BJ (cell line): ENCODE measurements at regions of chr17 and their contacts with region 1.

Region 1: DNA sequence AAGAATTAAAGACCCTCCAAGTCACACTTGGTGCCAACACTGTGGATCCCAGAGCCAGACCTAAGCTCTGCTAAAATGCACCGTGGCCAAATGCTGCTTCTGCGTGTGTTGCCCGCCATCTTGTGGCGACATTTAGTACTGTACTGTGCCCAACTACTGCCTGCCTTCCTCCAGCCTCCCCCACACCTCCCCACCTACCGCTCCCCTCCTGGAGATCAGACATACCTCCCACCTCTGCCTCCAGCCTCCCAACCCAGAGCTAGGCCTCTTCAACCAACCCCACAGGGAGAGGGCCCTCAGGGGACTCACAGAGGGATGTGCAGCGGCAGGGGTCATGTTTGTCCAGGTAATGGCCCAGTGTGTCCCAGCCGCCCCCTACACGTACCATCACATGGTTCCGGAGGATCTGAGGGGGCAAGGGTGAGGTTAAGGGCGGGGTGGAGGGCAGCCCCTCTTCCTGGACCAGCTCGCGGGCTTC is 5.5 kb downstream of the GAS2L2 start:
- DNase-seq: no peak
- H3K4me3 ChIP-seq: no peak overlapping the region
- H3K27me3 ChIP-seq: peaks cover 13% of the 10 kb centered on the region
- CTCF ChIP-seq: peak; percentile 82

Region 2: DNA sequence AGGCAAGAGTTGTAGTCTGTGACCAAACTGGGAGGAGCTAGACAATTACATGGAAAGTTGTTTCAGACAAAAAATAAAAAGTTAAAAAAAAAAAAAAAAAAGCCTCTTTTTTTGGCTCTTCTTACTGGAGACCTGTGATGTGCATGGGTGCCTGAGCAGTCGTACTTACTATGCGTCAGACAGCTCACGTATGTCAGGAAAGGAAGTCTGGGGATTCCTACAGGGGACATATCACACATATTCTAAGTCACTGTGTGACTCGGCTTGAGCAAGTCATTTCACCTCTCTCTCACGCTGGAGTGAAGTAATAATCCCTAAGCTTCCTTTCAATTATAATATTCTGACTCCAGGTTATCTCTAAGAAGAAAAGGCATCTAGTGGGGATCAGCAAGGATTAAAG is 192.9 kb before region 1 on chr17:
- CTCF ChIA-PET with region 1: interaction called, 12 read pairs
- POLR2A ChIA-PET with region 1: no interaction called
- DNase-seq: no peak
- H3K4me3 ChIP-seq: no peak overlapping the region
- H3K27me3 ChIP-seq: peaks cover 4% of the 10 kb centered on the region; the same call in 1 of the 2 replicates
- CTCF ChIP-seq: no peak

Region 3: GRCh38 chr17:35618628-35619027 is 129.0 kb before region 1 on chr17:
- CTCF ChIA-PET with region 1: interaction called, 268 read pairs
- POLR2A ChIA-PET with region 1: no interaction called
- DNase-seq: no peak
- H3K4me3 ChIP-seq: no peak overlapping the region
- H3K27me3 ChIP-seq: no peaks in the 10 kb centered on the region
- CTCF ChIP-seq: no peak

Region 4: GRCh38 chr17:35660902-35661301 is 86.7 kb before region 1 on chr17:
- CTCF ChIA-PET with region 1: interaction called, 17 read pairs
- POLR2A ChIA-PET with region 1: no interaction called
- DNase-seq: no peak
- H3K4me3 ChIP-seq: no peak overlapping the region
- H3K27me3 ChIP-seq: no peaks in the 10 kb centered on the region
- CTCF ChIP-seq: 0 out of 2 replicates have a peak, but pooled peaks have one; percentile 8

Region 5: DNA sequence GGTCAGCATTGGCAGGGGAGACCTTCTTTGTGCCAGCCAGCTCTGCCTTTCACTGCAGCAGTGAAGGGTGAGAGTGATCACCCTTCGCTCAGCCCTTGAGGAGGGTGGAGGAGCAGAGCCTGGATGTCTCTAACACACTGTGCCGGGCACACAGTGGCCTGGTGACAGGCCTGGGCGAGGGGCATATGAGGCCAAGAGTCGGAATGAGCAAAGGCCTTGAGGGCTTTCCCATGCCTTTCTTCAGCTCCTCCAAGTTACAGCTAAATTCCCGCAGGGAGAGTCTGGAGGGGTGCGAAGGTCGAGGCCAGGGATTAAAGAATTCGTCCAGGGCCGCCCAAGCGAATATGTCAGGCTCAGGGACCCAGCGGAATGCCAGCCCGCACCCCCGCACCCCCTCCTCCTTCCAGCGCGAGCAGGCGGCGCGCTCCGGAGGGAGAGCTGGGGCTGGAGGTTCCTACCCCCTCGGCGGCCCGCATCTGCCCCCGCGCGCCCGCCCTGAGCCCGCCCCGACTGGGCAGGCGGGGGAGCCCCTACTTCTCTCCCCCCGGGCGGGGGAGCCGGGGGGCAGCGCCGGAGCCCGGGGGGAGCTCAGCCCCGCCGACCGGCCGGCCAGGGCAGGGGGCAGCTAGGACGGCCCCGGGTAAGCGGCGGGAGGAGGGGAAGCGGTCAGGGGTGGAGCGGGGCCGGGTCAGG is 16.2 kb before region 1 on chr17 and contains the start of gene RASL10B:
- CTCF ChIA-PET with region 1: interaction called, 27 read pairs
- POLR2A ChIA-PET with region 1: no interaction called
- DNase-seq: no peak
- H3K4me3 ChIP-seq: peak within 1 kb of the TSS; percentile 59
- H3K27me3 ChIP-seq: no peaks in the 10 kb centered on the region
- CTCF ChIP-seq: no peak
- polyA plus RNA-seq, gene RASL10B: 3.2 and 4.5 TPM in 2 replicates

Region 6: GRCh38 chr17:35849469-35850348 is 102.1 kb after region 1 on chr17:
- CTCF ChIA-PET with region 1: no interaction called
- POLR2A ChIA-PET with region 1: no interaction called
- DNase-seq: peak; percentile 4
- H3K4me3 ChIP-seq: no peak overlapping the region
- H3K27me3 ChIP-seq: no peaks in the 10 kb centered on the region
- CTCF ChIP-seq: peak; percentile 80

Region 7: DNA sequence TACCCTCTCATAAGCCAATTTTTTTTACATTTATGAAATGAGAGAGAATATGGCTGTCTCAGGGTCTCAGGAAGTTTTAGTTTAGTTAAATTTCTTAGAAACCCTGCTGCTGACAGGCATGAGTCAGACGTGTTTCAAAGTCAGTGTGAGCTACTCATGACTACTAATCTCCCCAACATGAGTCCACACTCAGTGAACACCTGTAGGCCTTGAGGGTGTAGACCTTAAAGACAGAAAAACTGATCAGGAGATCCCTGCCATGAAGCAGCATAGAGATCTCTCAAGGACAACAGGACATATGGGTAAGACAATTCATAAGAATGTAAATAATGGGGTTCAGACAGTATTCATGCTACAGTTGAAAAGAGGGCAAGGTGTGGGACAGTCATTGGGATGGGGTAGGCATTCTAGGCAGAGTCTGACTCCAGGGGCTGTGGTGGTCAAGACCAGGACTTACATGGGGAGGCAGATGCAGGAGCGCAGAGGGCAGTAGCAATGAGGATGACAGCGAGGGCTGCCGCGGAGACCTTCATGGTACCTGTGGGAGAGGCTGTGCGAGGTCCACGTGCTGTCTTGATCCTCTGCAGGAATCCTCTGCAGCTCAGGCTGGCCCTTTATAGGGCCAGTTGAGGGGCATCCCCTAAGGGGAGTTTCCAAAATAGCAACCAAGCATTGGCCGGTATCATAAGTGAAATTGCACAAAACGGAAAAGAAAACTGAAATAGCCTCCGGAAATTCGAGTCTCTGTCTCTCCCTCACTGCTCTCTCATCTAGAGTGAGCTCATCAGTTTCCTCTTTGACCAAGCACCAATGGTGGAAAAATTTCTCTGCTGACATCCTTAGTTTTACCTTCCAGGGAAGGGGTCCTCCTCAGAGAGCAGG is 132.4 kb after region 1 on chr17 and contains the start of gene CCL5:
- CTCF ChIA-PET with region 1: no interaction called
- POLR2A ChIA-PET with region 1: no interaction called
- DNase-seq: no peak
- H3K4me3 ChIP-seq: no peak within 1 kb of the TSS
- H3K27me3 ChIP-seq: no peaks in the 10 kb centered on the region
- CTCF ChIP-seq: no peak
- polyA plus RNA-seq, gene CCL5: 0.16 TPM in 2 replicates

Region 8: GRCh38 chr17:36107660-36108059 is 360.1 kb after region 1 on chr17:
- CTCF ChIA-PET with region 1: no interaction called
- POLR2A ChIA-PET with region 1: no interaction called
- DNase-seq: no peak
- H3K4me3 ChIP-seq: no peak overlapping the region
- H3K27me3 ChIP-seq: no peaks in the 10 kb centered on the region
- CTCF ChIP-seq: no peak